Left cardiac atrium (tissue), 4 donors: ENCODE measurements at regions of chr12 and their contacts with region 1.

Region 1: DNA sequence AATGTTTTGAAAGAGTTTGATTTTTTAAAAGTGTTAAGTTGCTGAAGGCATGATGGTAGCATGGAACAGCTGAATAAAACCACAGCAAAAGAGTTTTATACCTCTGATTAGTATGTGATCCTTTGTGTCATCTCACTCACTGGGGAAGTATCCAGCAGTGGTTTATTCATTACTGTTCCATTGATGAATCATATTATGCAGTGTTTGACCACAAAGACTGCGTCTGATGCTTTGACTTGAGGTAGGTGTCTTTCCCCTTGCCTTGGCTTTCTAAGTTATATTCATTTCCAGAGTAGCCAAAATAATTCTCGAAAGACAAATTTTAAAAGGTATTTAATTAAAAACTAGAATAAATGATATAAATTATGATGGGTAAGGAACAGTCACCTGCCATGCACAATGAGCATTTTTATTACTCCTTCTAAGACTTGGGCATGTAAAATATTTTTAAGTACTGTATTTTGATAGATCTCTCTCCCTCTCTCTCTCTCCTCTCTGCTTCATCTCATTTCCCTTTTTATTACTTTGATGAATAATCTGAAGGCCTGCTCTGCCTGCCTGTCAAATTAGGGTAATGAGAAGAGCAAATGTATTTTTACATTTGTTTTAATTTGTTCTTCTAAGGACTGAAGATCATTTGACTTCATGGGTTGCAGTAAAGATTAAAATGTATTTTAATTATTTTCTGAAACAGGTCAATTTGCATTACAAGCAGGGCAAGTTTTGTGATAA is 164.9 kb downstream of the NAV3 start:
- DNase-seq: no peak
- ATAC-seq: no peak

Region 2: DNA sequence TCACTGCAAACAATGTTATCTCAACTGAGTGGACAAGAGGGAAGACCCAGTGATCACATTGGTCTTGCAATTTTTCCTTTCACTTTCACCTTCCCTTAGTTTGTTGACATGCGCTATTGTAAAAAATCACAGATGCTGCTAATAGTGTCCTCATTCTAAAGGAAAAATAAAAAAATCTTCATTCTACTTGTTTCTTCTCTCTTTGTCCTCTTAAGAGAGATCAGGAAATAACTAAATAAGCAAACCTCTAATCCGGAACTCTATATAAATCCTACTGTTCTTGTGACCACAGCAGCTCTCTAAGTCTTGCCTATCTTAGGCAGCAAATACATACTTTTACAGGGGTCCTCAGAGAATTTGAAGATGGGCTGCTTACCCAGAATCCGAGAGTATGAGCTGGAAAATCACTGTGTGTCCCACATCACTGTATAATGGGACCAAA is 92.8 kb after region 1 on chr12:
- intact Hi-C with region 1: no loop called
- DNase-seq: no peak
- ATAC-seq: no peak

Region 3: GRCh38 chr12:78118036-78118435 is 122.4 kb after region 1 on chr12:
- intact Hi-C with region 1: loop called in 1 of 2 experiments (anchors 5 kb)
- DNase-seq: no peak
- ATAC-seq: no peak